CD8-positive, alpha-beta T cell (primary cell): ENCODE measurements at regions of chr21 and their contacts with region 1.

Region 1: DNA sequence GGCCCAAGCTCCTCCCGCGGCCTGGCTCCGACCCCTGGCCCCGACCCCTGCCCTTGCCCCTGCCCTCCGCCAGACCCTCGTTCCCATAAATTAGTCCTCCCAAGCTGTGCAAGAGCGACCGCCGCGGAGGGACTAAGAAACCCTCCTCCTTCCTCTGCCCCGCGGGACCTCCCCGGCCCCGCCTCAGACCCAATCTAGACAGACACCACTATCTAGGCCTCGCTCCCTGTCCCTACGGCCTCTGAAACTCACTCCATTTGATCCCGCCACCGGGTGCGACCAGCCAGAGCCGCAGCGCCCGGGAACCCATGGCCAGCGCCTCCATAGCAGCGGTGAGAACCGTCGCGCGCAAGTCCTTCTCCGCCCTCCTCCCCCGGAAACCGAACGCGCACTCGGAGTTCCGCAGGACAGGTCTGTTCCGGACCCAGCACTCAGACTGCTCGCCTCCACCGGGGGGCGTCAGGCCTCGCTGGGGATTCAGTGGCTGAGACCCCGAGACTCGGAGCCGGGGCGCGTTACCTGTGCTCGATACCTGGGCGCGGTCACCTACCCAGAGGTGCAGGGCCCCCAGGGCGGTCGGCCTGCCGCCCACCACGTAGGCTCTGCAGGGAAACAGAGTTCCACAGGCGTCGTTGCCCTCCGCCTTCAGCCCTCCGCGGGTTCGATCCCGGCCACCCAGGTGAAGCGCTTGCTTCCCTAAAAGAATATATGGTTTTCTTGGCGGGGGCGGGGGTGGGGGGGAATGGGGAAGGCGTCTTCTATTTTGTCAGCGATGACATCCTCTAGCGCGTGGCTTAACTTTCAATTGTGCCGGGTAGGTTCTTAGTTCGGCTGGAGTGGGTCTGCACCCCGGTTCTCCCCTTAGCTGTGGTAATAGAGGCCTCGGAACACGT is at the start of gene MRPL39:
- DNase-seq: peak; percentile 73 to 91 (median 86)
- ATAC-seq: peak; percentile 84
- H3K4me3 ChIP-seq: peak within 1 kb of the TSS; percentile 83 to 94
- H3K4me3 Mint-ChIP-seq: peak within 1 kb of the TSS; percentile 100
- H3K27ac ChIP-seq: peak within 1 kb of the TSS; percentile 64 to 69
- H3K27ac Mint-ChIP-seq: peak within 1 kb of the TSS; percentile 98
- H3K4me1 ChIP-seq: peaks cover 22% of the 10 kb centered on the region
- H3K4me1 Mint-ChIP-seq: peaks cover 42% of the 10 kb centered on the region
- H3K27me3 ChIP-seq: no peaks in the 10 kb centered on the region
- H3K27me3 Mint-ChIP-seq: no peaks in the 10 kb centered on the region
- CTCF ChIP-seq: no peak
- total RNA-seq, gene MRPL39: 13.8 to 17.4 TPM

Region 2: GRCh38 chr21:25421327-25422028 is 185.9 kb before region 1 on chr21:
- CTCF ChIA-PET with region 1: interaction called, 4 read pairs
- POLR2A ChIA-PET with region 1: no interaction called
- intact Hi-C with region 1: loop called in 1 of 2 experiments (anchors 10 kb)
- DNase-seq: peak in 7 of 9 experiments; percentile 13 to 83 (median 53)
- ATAC-seq: peak; percentile 92
- H3K4me3 ChIP-seq: no peak overlapping the region
- H3K4me3 Mint-ChIP-seq: peak overlapping the region; percentile 40
- H3K27ac ChIP-seq: peak overlapping the region in 1 of 2 experiments; percentile 64
- H3K27ac Mint-ChIP-seq: peak overlapping the region; percentile 49
- H3K4me1 ChIP-seq: peaks cover 5% of the 10 kb centered on the region
- H3K4me1 Mint-ChIP-seq: peaks cover 12% of the 10 kb centered on the region
- H3K27me3 ChIP-seq: no peaks in the 10 kb centered on the region
- H3K27me3 Mint-ChIP-seq: peaks cover 4% of the 10 kb centered on the region
- CTCF ChIP-seq: peak; percentile 60

Region 3: GRCh38 chr21:25573409-25574206 is 33.8 kb before region 1 on chr21:
- CTCF ChIA-PET with region 1: interaction called, 6 read pairs
- POLR2A ChIA-PET with region 1: no interaction called
- intact Hi-C with region 1: loop called in 1 of 2 experiments (anchors 1 kb)
- DNase-seq: peak in 6 of 9 experiments; percentile 9 to 81 (median 34)
- ATAC-seq: peak; percentile 79
- H3K4me3 ChIP-seq: peak overlapping the region; percentile 6 to 9
- H3K4me3 Mint-ChIP-seq: peak overlapping the region; percentile 79
- H3K27ac ChIP-seq: peak overlapping the region; percentile 34 to 72
- H3K27ac Mint-ChIP-seq: peak overlapping the region; percentile 94
- H3K4me1 ChIP-seq: peaks cover 22% of the 10 kb centered on the region
- H3K4me1 Mint-ChIP-seq: peaks cover 49% of the 10 kb centered on the region
- H3K27me3 ChIP-seq: no peaks in the 10 kb centered on the region
- H3K27me3 Mint-ChIP-seq: no peaks in the 10 kb centered on the region
- CTCF ChIP-seq: no peak

Region 4: DNA sequence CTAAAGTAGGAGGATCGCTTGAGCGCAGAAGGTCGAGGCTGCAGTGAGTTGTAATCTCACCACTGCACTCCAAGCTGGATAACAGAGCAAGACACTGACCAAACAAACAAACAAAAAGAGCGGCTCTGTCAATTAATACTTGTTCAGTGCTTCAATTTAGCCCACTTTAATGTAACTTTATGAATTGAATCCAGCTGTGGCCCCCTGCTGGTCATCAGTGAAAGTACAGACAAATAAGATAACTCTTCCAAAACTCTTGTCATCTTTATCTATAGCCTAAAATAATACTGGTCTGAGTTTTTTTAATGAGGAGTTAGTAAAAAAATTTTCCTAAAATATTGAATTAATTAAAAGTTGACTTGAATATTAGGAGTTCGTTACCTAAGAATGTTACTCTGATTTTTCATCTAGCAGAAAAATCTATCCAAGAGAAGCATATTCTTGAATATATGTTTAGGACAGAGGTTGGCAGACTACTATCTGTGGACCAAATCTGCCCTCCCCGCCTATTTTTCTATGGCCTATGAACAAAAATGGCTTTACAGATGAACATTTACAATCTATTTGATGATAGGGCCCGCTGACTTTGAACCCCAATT is 101.2 kb after region 1 on chr21:
- CTCF ChIA-PET with region 1: interaction called, 34 read pairs
- POLR2A ChIA-PET with region 1: interaction called, 4 read pairs
- intact Hi-C with region 1: loop called (anchors 1 kb)
- DNase-seq: peak in 8 of 9 experiments; percentile 15 to 71 (median 54)
- ATAC-seq: peak; percentile 68
- H3K4me3 ChIP-seq: no peak overlapping the region
- H3K4me3 Mint-ChIP-seq: no peak overlapping the region
- H3K27ac ChIP-seq: no peak overlapping the region
- H3K27ac Mint-ChIP-seq: no peak overlapping the region
- H3K4me1 ChIP-seq: no peaks in the 10 kb centered on the region
- H3K4me1 Mint-ChIP-seq: no peaks in the 10 kb centered on the region
- H3K27me3 ChIP-seq: no peaks in the 10 kb centered on the region
- H3K27me3 Mint-ChIP-seq: no peaks in the 10 kb centered on the region
- CTCF ChIP-seq: peak; percentile 90

Region 5: DNA sequence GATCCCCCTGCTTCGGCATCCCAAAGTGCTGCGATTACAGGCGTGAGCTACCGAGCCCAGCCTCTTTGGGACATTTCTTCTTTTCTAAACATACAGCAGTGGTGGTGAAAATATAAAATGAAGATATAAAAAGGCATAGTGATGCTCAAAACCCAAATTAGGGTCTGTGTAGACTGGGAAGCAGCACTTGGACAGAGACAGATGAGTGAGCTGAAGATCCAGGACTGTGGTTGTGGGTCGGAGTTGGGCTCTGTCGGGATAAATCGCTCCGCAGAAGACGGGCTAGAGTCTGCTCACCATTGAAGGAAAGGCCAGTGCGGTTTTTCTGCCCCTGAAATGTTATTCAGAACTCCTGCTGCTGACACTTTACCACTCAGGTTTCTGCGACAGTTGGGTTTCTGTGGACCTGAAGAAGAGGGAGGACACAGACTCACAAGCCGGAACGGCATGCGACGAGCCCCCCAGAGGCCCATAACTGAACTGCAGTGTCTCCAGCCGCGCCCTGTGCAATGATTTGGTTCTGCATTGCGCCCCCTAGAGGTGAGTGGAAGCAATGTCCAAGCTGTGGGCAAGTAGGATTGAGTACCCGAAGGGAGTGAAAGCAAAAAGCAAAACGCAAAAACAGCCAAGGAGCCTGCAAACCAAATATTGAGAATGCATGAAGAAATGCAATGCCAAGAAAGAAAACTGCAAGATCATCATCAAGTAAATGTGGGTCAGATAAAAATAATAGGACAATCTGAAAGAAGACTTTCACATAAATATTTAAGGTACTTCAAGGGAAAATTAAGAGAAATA is 194.0 kb after region 1 on chr21:
- CTCF ChIA-PET with region 1: interaction called, 4 read pairs
- POLR2A ChIA-PET with region 1: no interaction called
- intact Hi-C with region 1: loop called (anchors 1 to 5 kb)
- DNase-seq: peak; percentile 63 to 88 (median 82)
- ATAC-seq: peak; percentile 100
- H3K4me3 ChIP-seq: no peak overlapping the region
- H3K4me3 Mint-ChIP-seq: peak overlapping the region; percentile 30
- H3K27ac ChIP-seq: no peak overlapping the region
- H3K27ac Mint-ChIP-seq: no peak overlapping the region
- H3K4me1 ChIP-seq: peaks cover 3% of the 10 kb centered on the region
- H3K4me1 Mint-ChIP-seq: peaks cover 7% of the 10 kb centered on the region
- H3K27me3 ChIP-seq: no peaks in the 10 kb centered on the region
- H3K27me3 Mint-ChIP-seq: peaks cover 10% of the 10 kb centered on the region
- CTCF ChIP-seq: peak; percentile 97

Region 6: DNA sequence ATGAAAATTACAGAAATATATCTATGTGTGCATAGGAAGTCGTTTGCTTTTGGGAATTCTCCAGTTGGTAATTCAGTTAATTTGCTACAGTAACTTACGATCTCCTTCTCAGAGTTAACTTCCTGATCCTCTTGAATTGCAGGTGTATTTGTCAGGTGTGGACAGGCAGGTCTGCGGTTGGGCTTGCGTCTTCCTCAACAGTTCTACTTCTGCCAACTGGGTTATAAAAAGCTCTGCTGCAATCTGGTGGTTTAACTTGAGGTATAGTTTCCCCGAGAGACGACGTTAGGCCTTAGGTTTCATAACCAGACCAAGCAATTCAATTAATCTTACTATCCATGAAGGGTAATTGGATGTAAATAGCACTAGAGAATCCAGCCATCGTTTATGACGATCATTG is 215.6 kb after region 1 on chr21:
- CTCF ChIA-PET with region 1: no interaction called
- POLR2A ChIA-PET with region 1: no interaction called
- intact Hi-C with region 1: no loop called
- DNase-seq: no peak
- ATAC-seq: no peak
- H3K4me3 ChIP-seq: no peak overlapping the region
- H3K4me3 Mint-ChIP-seq: no peak overlapping the region
- H3K27ac ChIP-seq: no peak overlapping the region
- H3K27ac Mint-ChIP-seq: no peak overlapping the region
- H3K4me1 ChIP-seq: no peaks in the 10 kb centered on the region
- H3K4me1 Mint-ChIP-seq: no peaks in the 10 kb centered on the region
- H3K27me3 ChIP-seq: no peaks in the 10 kb centered on the region
- H3K27me3 Mint-ChIP-seq: no peaks in the 10 kb centered on the region
- CTCF ChIP-seq: no peak

Region 7: GRCh38 chr21:25881525-25882376 is 274.4 kb after region 1 on chr21:
- CTCF ChIA-PET with region 1: no interaction called
- POLR2A ChIA-PET with region 1: no interaction called
- intact Hi-C with region 1: loop called (anchors 5 kb)
- DNase-seq: peak; percentile 27 to 71 (median 53)
- ATAC-seq: peak; percentile 69
- H3K4me3 ChIP-seq: no peak overlapping the region
- H3K4me3 Mint-ChIP-seq: no peak overlapping the region
- H3K27ac ChIP-seq: no peak overlapping the region
- H3K27ac Mint-ChIP-seq: no peak overlapping the region
- H3K4me1 ChIP-seq: no peaks in the 10 kb centered on the region
- H3K4me1 Mint-ChIP-seq: no peaks in the 10 kb centered on the region
- H3K27me3 ChIP-seq: no peaks in the 10 kb centered on the region
- H3K27me3 Mint-ChIP-seq: no peaks in the 10 kb centered on the region
- CTCF ChIP-seq: peak; percentile 82

Region 8: DNA sequence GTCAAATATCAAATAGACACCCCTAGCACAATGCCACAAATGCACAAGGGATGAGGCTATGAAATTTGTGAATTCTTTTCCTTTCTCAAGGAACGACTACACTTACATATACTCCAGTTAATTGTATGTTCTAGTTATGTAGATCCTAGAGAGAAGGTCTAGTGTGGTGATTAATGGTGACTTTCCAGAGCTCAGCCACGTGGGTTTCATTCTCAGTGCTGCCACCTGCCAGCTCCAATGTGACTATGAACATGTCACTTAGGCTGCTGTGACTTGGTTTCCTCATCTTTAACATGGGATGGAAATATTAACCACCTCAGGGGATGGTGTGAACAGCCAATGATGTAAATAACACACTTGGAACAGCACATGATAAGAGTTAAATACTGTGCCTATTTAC is 424.9 kb after region 1 on chr21:
- CTCF ChIA-PET with region 1: no interaction called
- POLR2A ChIA-PET with region 1: no interaction called
- intact Hi-C with region 1: no loop called
- DNase-seq: no peak
- ATAC-seq: no peak
- H3K4me3 ChIP-seq: no peak overlapping the region
- H3K4me3 Mint-ChIP-seq: no peak overlapping the region
- H3K27ac ChIP-seq: no peak overlapping the region
- H3K27ac Mint-ChIP-seq: no peak overlapping the region
- H3K4me1 ChIP-seq: no peaks in the 10 kb centered on the region
- H3K4me1 Mint-ChIP-seq: peaks cover 3% of the 10 kb centered on the region
- H3K27me3 ChIP-seq: no peaks in the 10 kb centered on the region
- H3K27me3 Mint-ChIP-seq: no peaks in the 10 kb centered on the region
- CTCF ChIP-seq: no peak

Region 9: DNA sequence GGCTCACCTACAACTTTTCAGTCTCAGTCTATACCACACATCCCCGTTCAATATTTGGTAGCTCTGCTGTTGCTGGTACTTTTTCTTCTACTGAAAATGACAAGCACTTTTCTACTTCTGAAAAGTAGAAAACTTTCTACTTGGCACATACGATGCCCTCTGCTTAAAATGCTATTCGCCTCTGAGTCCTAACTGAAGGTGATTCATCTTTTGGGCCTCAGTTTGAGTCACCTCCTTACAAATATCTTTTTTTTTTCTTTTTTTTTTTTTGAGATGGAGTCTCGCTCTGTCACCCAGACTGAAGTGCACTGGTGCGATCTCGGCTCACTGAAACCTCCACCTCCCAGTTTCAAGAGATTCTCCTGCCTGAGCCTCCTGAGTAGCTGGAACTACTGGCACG is 1101.7 kb after region 1 on chr21:
- CTCF ChIA-PET with region 1: no interaction called
- POLR2A ChIA-PET with region 1: no interaction called
- intact Hi-C with region 1: loop called in 1 of 2 experiments (anchors 5 kb)
- DNase-seq: no peak
- ATAC-seq: no peak
- H3K4me3 ChIP-seq: no peak overlapping the region
- H3K4me3 Mint-ChIP-seq: no peak overlapping the region
- H3K27ac ChIP-seq: no peak overlapping the region
- H3K27ac Mint-ChIP-seq: no peak overlapping the region
- H3K4me1 ChIP-seq: no peaks in the 10 kb centered on the region
- H3K4me1 Mint-ChIP-seq: no peaks in the 10 kb centered on the region
- H3K27me3 ChIP-seq: no peaks in the 10 kb centered on the region
- H3K27me3 Mint-ChIP-seq: peaks cover 2% of the 10 kb centered on the region
- CTCF ChIP-seq: no peak